ENCODE measurements at regions of chr19 and their contacts with region 1.

Region 1: GRCh38 chr19:46288896-46289588 is 7.8 kb upstream of the HIF3A start:
- DNase-seq: peak; percentile 52
- H3K4me3 ChIP-seq: no peak overlapping the region
- H3K27me3 ChIP-seq: no peaks in the 10 kb centered on the region
- CTCF ChIP-seq: no peak

Region 2: DNA sequence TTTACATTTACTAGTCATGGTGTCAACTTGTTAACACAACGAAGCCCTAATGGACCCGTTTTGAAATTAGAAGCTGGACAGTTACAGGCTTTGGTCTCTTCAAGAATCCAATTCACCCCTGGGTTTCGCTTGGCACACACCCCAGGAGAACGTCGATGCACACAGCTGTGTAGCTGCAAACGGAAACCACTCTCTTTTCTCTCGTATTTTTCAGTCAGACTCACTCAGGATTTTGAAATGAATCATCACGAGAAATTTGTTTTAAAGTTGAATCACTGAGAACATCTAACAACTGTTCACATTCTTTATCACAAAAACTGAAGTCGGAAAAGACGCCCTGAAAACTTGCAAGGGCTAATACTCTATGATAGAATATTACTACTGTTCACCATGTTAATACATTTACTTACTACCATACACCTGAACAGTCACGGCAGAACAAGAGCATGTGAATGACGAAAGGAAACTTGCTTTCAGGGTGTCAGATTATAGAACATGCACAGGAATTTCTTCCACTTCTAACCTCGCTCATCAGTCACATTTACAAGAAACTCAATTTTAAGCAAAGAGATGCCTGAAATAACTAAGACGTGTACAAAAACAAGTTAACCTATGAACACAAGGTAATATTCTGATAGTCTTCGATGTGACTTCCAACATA is 177.6 kb after region 1 on chr19:
- CTCF ChIA-PET with region 1: no interaction called
- POLR2A ChIA-PET with region 1: interaction called, 11 read pairs
- DNase-seq: peak; percentile 62
- H3K4me3 ChIP-seq: no peak overlapping the region
- H3K27me3 ChIP-seq: no peaks in the 10 kb centered on the region
- CTCF ChIP-seq: no peak